Activated CD4-positive, alpha-beta memory T cell treated with anti-CD3 and anti-CD28 coated beads for 36 hours (primary cell): ENCODE measurements at regions of chr11 and their contacts with region 1.

Region 1: DNA sequence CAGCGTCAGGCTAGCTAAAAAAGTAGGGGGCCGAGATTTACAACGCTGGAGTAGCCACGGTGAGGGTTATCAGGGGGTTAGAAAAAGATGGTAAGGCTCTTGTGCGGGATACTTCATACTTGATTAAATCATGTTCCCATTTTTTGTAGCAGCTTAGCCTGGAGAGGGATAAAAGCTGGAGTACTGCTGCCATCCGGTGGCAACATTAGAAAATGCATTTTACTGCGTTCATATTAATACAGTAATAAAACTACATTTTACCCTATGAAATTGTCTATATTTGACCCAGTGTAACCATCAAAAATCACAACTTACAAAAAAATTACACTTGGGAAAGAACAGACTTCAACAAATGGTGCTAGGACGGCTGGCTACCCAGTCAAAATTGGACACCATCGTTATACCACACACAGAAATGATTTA is 17.3 kb downstream of the RPUSD4 start:
- DNase-seq: peak; percentile 43
- H3K4me3 Mint-ChIP-seq: no peak overlapping the region
- H3K27ac Mint-ChIP-seq: no peak overlapping the region
- H3K4me1 Mint-ChIP-seq: no peaks in the 10 kb centered on the region
- H3K27me3 Mint-ChIP-seq: no peaks in the 10 kb centered on the region

Region 2: DNA sequence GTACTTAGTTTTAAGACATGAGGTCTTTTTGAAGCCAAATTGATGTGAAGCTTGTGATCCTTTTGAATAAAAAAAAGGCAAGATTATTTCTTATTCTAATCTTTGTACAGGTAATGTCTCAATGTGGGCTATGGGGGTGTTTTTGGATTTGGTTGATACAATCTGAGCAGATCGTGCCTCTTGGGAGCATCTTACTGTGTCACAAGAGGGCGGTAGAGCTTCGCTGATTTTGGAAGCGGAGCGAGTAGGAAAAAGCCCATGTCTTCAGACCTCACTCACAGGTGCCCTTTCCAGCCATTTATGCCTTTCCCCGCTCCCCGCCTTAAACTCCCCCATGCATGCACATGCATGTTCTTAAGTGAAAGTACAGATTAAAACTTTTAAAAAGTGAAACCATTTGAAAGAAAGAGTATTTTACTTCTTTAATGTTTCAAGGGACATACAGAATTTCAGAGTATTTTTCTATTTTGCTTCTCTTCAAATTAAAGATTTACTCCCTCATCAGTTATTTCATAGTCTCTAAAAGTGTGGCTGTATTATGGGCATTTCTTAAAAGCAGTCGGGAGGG is 271.0 kb before region 1 on chr11:
- CTCF ChIA-PET with region 1: interaction called, 47 read pairs
- POLR2A ChIA-PET with region 1: no interaction called
- intact Hi-C with region 1: loop called (anchors 1 kb)
- DNase-seq: peak; percentile 69
- H3K4me3 Mint-ChIP-seq: no peak overlapping the region
- H3K27ac Mint-ChIP-seq: no peak overlapping the region
- H3K4me1 Mint-ChIP-seq: no peaks in the 10 kb centered on the region
- H3K27me3 Mint-ChIP-seq: peaks cover 18% of the 10 kb centered on the region

Region 3: GRCh38 chr11:125968354-125968753 is 225.8 kb before region 1 on chr11:
- CTCF ChIA-PET with region 1: no interaction called
- POLR2A ChIA-PET with region 1: no interaction called
- intact Hi-C with region 1: no loop called
- DNase-seq: no peak
- H3K4me3 Mint-ChIP-seq: no peak overlapping the region
- H3K27ac Mint-ChIP-seq: no peak overlapping the region
- H3K4me1 Mint-ChIP-seq: no peaks in the 10 kb centered on the region
- H3K27me3 Mint-ChIP-seq: no peaks in the 10 kb centered on the region